Ovary (tissue), 10 donors: ENCODE measurements at regions of chr7 and their contacts with region 1.

Region 1: GRCh38 chr7:7535691-7536090 is at the start of gene COL28A1:
- DNase-seq: no peak
- H3K4me3 ChIP-seq: no peak within 1 kb of the TSS
- H3K27ac ChIP-seq: no peak within 1 kb of the TSS
- H3K4me1 ChIP-seq: no peaks in the 10 kb centered on the region
- H3K27me3 ChIP-seq: no peaks in the 10 kb centered on the region
- CTCF ChIP-seq: no peak
- EP300 ChIP-seq: no peak
- POLR2A ChIP-seq: no peak
- total RNA-seq, gene COL28A1: 0.87 to 3.2 (median 1.4) TPM

Region 2: GRCh38 chr7:7424151-7424873 is 111.4 kb before region 1 on chr7:
- intact Hi-C with region 1: loop called in 1 of 4 experiments (anchors 10 kb)
- DNase-seq: peak; percentile 36 to 72 (median 58)
- H3K4me3 ChIP-seq: peak overlapping the region; percentile 39
- H3K27ac ChIP-seq: peak overlapping the region in 1 of 2 donors; percentile 17
- H3K4me1 ChIP-seq: no peaks in the 10 kb centered on the region
- H3K27me3 ChIP-seq: no peaks in the 10 kb centered on the region
- CTCF ChIP-seq: peak; percentile 30 to 77 (median 63)
- EP300 ChIP-seq: no peak
- POLR2A ChIP-seq: no peak

Region 3: DNA sequence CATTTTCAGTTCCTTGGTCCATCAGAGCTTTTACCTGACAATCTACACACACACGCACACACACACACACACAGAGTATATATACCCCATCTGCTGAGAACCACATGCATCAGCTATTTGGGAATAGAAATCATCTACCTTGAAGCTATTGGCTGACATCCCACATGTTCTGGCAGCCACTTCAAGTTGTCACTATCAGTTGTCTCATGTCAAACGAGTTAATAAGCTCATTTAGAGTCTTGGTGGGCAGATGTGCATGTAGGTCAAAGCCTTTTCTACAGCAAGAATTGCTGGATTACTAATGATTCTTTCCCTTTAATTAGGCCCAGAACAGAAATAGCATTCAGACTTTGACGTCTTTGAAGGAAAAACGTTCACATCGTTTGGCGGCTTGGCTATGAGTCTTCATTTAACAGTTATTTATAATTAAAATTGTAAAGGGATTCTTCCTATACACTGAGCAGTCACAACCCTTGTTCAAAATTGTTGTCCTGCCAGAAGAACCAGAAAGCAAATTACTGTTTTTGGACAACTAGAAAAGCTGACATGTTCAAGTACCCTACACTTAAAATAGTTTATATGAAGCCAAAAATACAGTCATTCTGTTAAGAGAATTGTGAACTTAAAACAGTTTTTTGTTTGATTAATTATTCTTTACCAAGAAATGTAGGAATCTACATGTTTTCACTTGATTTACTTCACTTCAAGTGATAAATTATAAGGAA is 36.7 kb before region 1 on chr7:
- intact Hi-C with region 1: no loop called
- DNase-seq: no peak
- H3K4me3 ChIP-seq: no peak overlapping the region
- H3K27ac ChIP-seq: no peak overlapping the region
- H3K4me1 ChIP-seq: no peaks in the 10 kb centered on the region
- H3K27me3 ChIP-seq: no peaks in the 10 kb centered on the region
- CTCF ChIP-seq: no peak
- EP300 ChIP-seq: no peak
- POLR2A ChIP-seq: no peak

Region 4: GRCh38 chr7:8762803-8763202 is 1227.1 kb after region 1 on chr7:
- intact Hi-C with region 1: no loop called
- DNase-seq: no peak
- H3K4me3 ChIP-seq: no peak overlapping the region
- H3K27ac ChIP-seq: no peak overlapping the region
- H3K4me1 ChIP-seq: no peaks in the 10 kb centered on the region
- H3K27me3 ChIP-seq: no peaks in the 10 kb centered on the region
- CTCF ChIP-seq: no peak
- EP300 ChIP-seq: no peak
- POLR2A ChIP-seq: no peak